ENCODE measurements at regions of chr5 and their contacts with region 1.

Region 1: GRCh38 chr5:132456296-132457001 is 34.1 kb downstream of the IRF1 start:
- DNase-seq: peak; percentile 63
- H3K4me3 Mint-ChIP-seq: peak overlapping the region; percentile 69
- H3K27ac Mint-ChIP-seq: peak overlapping the region; percentile 99
- H3K4me1 Mint-ChIP-seq: peaks cover 94% of the 10 kb centered on the region
- H3K27me3 Mint-ChIP-seq: no peaks in the 10 kb centered on the region

Region 2: GRCh38 chr5:132293066-132293991 is 163.1 kb before region 1 on chr5:
- intact Hi-C with region 1: loop called (anchors 10 kb)
- DNase-seq: peak; percentile 53
- H3K4me3 Mint-ChIP-seq: peak overlapping the region; percentile 93
- H3K27ac Mint-ChIP-seq: peak overlapping the region; percentile 75
- H3K4me1 Mint-ChIP-seq: peaks cover 30% of the 10 kb centered on the region
- H3K27me3 Mint-ChIP-seq: peaks cover 15% of the 10 kb centered on the region

Region 3: DNA sequence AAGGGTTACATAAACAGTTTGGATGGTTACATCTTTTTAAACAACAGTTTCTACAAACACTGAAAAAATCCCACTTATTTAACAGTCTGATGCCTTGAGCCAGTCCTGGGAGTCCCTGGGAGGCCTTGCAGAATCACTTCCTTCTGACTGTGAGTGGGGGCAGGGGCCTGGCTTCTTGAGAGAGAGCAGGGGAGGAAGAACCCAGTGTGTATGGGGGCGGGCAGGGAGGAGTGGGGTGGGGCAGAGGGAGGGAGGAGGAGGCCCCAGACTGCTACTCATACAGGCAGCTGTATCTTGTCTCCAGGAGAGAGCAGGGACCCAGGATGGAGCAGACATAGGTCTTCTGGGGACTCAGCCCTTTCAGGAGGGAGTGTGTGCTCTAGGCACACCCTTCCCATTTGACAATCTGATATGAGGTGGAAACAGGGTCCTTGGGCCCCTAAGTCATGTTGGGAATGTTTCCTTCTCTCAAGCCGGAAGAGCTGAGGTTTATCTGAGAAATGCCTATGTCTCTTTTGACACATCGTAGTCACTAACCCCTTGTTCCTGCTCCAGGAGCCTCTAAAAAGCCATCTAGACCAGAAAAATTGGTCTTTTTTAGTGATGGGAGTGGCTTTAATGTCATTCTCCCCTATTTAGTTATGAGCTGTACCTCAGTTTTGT is 18.7 kb before region 1 on chr5:
- intact Hi-C with region 1: loop called (anchors 1 kb)
- DNase-seq: peak; percentile 47
- H3K4me3 Mint-ChIP-seq: peak overlapping the region; percentile 67
- H3K27ac Mint-ChIP-seq: peak overlapping the region; percentile 92
- H3K4me1 Mint-ChIP-seq: peaks cover 87% of the 10 kb centered on the region
- H3K27me3 Mint-ChIP-seq: no peaks in the 10 kb centered on the region

Region 4: DNA sequence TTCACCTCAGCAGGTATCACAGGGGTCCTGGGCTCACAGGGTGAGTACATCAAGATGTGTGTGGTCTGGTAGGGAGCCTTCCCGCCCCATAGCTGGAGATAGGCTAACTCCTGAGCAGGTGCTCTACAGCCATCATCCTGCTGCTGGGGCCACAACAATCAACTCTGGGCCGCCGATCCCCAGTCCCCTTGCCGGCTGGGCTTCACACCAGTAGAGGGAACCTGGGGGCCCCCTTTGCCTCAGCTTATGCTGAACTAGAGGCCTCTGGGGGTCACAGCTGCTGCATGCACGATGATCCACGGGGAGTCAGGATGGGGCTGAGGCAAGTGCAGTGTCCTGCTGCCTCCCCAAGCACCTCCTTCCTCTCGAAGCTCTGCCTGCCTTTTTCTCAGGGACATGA is 12.4 kb before region 1 on chr5:
- intact Hi-C with region 1: loop called (anchors 1 kb)
- DNase-seq: no peak
- H3K4me3 Mint-ChIP-seq: no peak overlapping the region
- H3K27ac Mint-ChIP-seq: peak overlapping the region; percentile 10
- H3K4me1 Mint-ChIP-seq: peaks cover 89% of the 10 kb centered on the region
- H3K27me3 Mint-ChIP-seq: no peaks in the 10 kb centered on the region

Region 5: GRCh38 chr5:132466433-132467286 is 10.2 kb after region 1 on chr5:
- intact Hi-C with region 1: loop called (anchors 1 kb)
- DNase-seq: peak; percentile 71
- H3K4me3 Mint-ChIP-seq: peak overlapping the region; percentile 77
- H3K27ac Mint-ChIP-seq: peak overlapping the region; percentile 97
- H3K4me1 Mint-ChIP-seq: peaks cover 94% of the 10 kb centered on the region
- H3K27me3 Mint-ChIP-seq: no peaks in the 10 kb centered on the region

Region 6: GRCh38 chr5:132473019-132473531 is 16.6 kb after region 1 on chr5:
- intact Hi-C with region 1: loop called (anchors 2 kb)
- DNase-seq: peak; percentile 82
- H3K4me3 Mint-ChIP-seq: peak overlapping the region; percentile 29
- H3K27ac Mint-ChIP-seq: peak overlapping the region; percentile 88
- H3K4me1 Mint-ChIP-seq: peaks cover 83% of the 10 kb centered on the region
- H3K27me3 Mint-ChIP-seq: no peaks in the 10 kb centered on the region

Region 7: DNA sequence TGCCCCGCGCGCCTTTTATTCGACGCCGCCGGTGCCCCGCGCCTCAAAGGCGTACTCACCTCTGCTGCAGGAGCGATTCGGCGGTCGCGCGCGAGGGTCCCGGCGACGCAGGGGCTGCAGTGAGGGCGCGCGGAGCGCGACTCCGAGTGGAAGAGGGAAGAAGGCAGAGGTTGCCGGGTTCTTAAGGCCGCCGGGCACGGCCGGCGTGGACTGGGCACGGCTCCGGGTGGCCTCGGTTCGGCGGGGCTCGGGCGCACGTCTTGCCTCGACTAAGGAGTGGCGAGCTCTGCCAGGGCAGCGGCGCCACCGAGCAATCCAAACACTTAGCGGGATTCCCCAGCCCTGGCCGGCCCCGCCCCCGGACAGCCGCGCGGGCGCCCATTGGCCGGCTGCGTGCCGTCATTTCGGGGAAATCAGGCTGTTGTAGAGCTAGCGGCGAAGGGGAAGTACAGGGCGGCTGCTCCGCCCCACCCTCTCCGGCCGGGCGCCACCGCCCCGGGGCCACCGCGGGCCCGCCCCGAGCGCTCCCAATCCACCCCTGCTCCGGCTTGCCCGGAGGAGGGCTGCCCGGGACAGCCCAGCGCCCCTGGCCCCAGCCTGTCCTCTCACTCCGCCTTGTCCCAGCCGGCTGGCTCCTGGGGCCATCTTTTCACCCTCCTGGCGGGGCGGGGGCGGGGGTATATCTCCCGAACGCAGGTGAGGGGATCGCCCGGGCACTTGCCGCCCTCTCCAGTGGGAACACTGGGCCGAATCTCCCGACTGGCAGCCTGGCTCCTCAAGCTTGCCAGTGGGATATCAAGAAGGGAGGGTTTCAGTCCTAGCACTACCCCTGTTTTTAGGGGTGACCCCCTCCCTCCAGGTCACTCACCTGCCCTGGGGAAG is 34.3 kb after region 1 on chr5 and contains the start of gene IRF1:
- intact Hi-C with region 1: loop called (anchors 1 kb)
- DNase-seq: peak; percentile 99
- H3K4me3 Mint-ChIP-seq: peak within 1 kb of the TSS; percentile 99
- H3K27ac Mint-ChIP-seq: peak within 1 kb of the TSS; percentile 95
- H3K4me1 Mint-ChIP-seq: peaks cover 76% of the 10 kb centered on the region
- H3K27me3 Mint-ChIP-seq: no peaks in the 10 kb centered on the region
- total RNA-seq, gene IRF1: 190 and 198 TPM in 2 replicates

Region 8: GRCh38 chr5:132525299-132525724 is 68.9 kb after region 1 on chr5:
- intact Hi-C with region 1: no loop called
- DNase-seq: no peak
- H3K4me3 Mint-ChIP-seq: peak overlapping the region; percentile 72
- H3K27ac Mint-ChIP-seq: peak overlapping the region; percentile 94
- H3K4me1 Mint-ChIP-seq: peaks cover 66% of the 10 kb centered on the region
- H3K27me3 Mint-ChIP-seq: no peaks in the 10 kb centered on the region

Measured in activated T-helper 1 cell treated with anti-CD3 and anti-CD28 coated beads, Interleukin-12 subunit alpha, Interleukin-12 subunit beta, Interleukin-2, Interleukin-4 antibody, amounts not matched to agents 30 ng/mL and 10 ng/mL and 1 ng/mL, durations not matched to agents 14 hours and 24 hours and 36 hours (primary cell).